H1 (cell line): ENCODE measurements at regions of chr9 and their contacts with region 1.

Region 1: GRCh38 chr9:128296337-128297220 is 20.5 kb downstream of the SWI5 start:
- DNase-seq: no peak
- H3K4me3 ChIP-seq: no peak overlapping the region
- H3K27ac ChIP-seq: no peak overlapping the region
- H3K4me1 ChIP-seq: no peaks in the 10 kb centered on the region
- H3K27me3 ChIP-seq: no peaks in the 10 kb centered on the region
- CTCF ChIP-seq: no peak
- EP300 ChIP-seq: no peak
- POLR2A ChIP-seq: no peak
- RAD21 ChIP-seq: no peak

Region 2: GRCh38 chr9:128286440-128286839 is 10.1 kb before region 1 on chr9:
- CTCF ChIA-PET with region 1: interaction called, 19 read pairs
- POLR2A ChIA-PET with region 1: interaction called, 6 read pairs
- DNase-seq: no peak
- H3K4me3 ChIP-seq: no peak overlapping the region
- H3K27ac ChIP-seq: no peak overlapping the region
- H3K4me1 ChIP-seq: no peaks in the 10 kb centered on the region
- H3K27me3 ChIP-seq: no peaks in the 10 kb centered on the region
- CTCF ChIP-seq: no peak
- EP300 ChIP-seq: no peak
- POLR2A ChIP-seq: no peak
- RAD21 ChIP-seq: no peak

Region 3: DNA sequence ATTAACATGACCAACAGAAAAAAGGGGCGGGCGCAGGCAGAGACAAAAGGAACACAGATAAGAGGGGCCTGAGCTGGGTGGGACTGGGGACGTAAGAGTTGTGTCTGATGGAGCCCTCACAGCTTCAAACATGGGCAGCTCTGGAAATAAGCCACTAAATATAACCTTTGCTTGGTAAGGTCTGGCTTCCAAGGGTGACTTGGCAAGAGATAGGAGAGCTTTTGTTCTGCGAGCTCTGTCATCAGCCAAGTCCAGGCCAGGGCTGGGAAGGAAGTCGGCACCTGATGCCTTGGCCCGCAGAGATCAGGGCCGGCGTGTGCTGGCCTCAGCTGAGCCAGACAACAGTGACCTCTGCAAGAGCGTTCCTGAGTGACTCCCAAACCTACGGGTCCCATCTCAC is 13.9 kb after region 1 on chr9:
- CTCF ChIA-PET with region 1: interaction called, 21 read pairs
- POLR2A ChIA-PET with region 1: interaction called, 9 read pairs
- DNase-seq: no peak
- H3K4me3 ChIP-seq: no peak overlapping the region
- H3K27ac ChIP-seq: no peak overlapping the region
- H3K4me1 ChIP-seq: no peaks in the 10 kb centered on the region
- H3K27me3 ChIP-seq: no peaks in the 10 kb centered on the region
- CTCF ChIP-seq: no peak
- EP300 ChIP-seq: no peak
- POLR2A ChIP-seq: no peak
- RAD21 ChIP-seq: no peak

Region 4: DNA sequence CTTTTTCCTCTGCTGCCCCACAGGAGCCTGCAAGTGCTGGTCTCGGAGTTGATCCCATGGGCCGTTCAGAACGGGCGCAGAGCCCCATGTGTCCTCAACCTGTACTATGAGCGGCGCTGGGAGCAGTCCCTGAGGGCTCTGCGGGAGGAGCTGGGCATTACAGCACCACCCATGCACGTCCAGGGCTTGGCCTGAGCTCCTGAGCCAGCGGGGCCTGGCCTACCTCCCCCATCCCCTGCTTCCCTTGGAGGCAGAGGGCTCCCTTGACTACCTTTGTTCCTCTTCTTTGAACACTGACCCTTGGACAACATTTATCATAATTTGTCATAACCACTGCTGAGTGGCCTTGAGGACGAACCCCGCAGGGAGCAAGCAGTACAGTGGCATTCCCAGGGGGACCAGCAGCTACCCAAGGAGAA is 36.9 kb after region 1 on chr9:
- CTCF ChIA-PET with region 1: interaction called, 13 read pairs
- POLR2A ChIA-PET with region 1: interaction called, 13 read pairs
- DNase-seq: no peak
- H3K4me3 ChIP-seq: no peak overlapping the region
- H3K27ac ChIP-seq: no peak overlapping the region
- H3K4me1 ChIP-seq: no peaks in the 10 kb centered on the region
- H3K27me3 ChIP-seq: no peaks in the 10 kb centered on the region; a peak in 1 of 7 replicates
- CTCF ChIP-seq: no peak
- EP300 ChIP-seq: no peak
- POLR2A ChIP-seq: no peak
- RAD21 ChIP-seq: no peak

Region 5: GRCh38 chr9:128341435-128341849 is 44.9 kb after region 1 on chr9:
- CTCF ChIA-PET with region 1: interaction called, 78 read pairs
- POLR2A ChIA-PET with region 1: interaction called, 5 read pairs
- DNase-seq: peak in 1 of 2 experiments; percentile 85
- H3K4me3 ChIP-seq: peak overlapping the region; percentile 60 to 90 (median 76); a peak in 7 of 8 replicates
- H3K27ac ChIP-seq: no peak overlapping the region
- H3K4me1 ChIP-seq: peaks cover 0 to 2% (median 0%) of the 10 kb centered on the region in 4 experiments; a peak in 2 of 7 replicates
- H3K27me3 ChIP-seq: no peaks in the 10 kb centered on the region
- CTCF ChIP-seq: peak; percentile 65 to 81 (median 76)
- EP300 ChIP-seq: no peak
- POLR2A ChIP-seq: no peak
- RAD21 ChIP-seq: peak; percentile 57 to 64